Caco-2 (cell line): ENCODE measurements at regions of chr19 and their contacts with region 1.

Region 1: DNA sequence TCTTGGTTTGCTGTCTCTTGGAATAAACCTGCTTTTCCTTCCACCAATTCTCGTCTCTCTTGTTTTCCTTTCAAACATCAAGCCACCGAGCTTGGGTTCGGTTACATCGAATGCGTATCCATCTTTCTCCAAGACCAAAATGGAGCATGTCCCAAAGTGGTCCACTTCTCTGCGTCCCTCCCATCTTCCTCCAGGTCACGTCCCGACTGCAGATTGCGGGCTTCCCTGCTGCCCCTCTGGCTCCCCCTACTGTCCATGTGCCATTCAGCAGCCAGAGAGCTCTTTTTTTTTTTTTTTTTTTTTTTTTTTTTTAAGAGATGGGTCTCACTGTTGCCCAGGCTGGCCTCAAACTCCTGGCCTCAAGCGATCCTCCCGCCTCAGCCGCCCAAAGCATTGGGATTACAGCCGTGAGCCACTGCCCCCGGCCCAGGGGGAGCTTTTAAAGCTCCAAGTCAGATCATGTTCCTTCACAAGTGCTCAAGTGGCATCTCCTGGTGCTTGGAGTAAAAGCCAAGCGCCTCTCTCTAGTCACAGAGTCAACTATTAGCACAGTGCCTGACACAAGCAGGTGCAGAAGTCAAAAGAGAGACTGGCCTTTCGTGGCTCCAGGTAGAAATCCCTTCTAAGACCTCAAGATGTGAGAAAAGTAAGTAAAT is 10.0 kb downstream of the COL5A3 start:
- DNase-seq: peak; percentile 65 to 76
- H3K4me3 ChIP-seq: no peak overlapping the region
- H3K4me3 Mint-ChIP-seq: no peak overlapping the region
- H3K27ac Mint-ChIP-seq: no peak overlapping the region
- H3K4me1 ChIP-seq: no peaks in the 10 kb centered on the region
- H3K4me1 Mint-ChIP-seq: no peaks in the 10 kb centered on the region
- H3K27me3 ChIP-seq: no peaks in the 10 kb centered on the region
- H3K27me3 Mint-ChIP-seq: peaks cover 19% of the 10 kb centered on the region
- CTCF ChIP-seq: peak; percentile 64 to 81

Region 2: DNA sequence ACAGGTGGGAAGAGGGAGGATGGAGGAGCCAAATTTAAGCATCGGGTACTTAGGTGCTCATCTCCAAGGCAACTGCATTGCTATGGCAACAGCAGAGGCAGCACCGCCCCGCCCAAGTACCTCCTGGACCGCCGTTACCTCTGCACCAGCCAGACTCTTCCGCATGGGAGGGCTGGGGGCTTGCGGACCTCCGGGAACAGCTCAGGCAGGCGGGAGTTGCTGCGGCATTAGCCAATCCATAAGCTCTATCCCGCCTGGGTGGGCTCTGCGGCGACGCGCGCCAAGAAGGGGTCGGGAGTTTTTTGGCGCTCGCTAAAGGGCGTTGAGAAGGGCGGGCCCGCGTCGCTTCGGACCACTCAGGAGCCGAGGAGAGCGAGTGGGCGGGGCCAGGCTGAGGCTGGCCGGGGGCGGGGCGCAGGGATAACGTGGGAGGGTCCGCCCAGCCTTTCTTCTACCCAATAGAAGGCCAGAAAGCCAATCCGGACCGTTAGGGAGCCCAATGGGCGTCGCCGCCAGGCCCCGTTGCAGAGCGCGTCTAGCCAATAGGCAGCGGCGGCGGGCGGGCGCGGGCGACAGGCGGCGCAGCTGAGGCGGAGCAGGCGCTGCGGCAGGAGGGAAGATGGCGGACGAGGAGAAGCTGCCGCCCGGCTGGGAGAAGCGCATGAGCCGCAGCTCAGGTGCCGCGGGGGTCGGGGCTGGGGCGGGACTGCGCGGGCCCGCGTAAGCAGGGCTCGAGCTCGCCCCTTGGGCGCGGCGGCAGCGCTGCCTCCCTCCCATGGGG is 165.4 kb before region 1 on chr19 and contains the start of gene PIN1:
- CTCF ChIA-PET with region 1: no interaction called
- POLR2A ChIA-PET with region 1: no interaction called
- intact Hi-C with region 1: no loop called
- DNase-seq: peak; percentile 98
- H3K4me3 ChIP-seq: peak within 1 kb of the TSS; percentile 95
- H3K4me3 Mint-ChIP-seq: peak within 1 kb of the TSS; percentile 84
- H3K27ac Mint-ChIP-seq: peak within 1 kb of the TSS; percentile 83
- H3K4me1 ChIP-seq: no peaks in the 10 kb centered on the region; the same call in 1 of the 2 replicates
- H3K4me1 Mint-ChIP-seq: no peaks in the 10 kb centered on the region
- H3K27me3 ChIP-seq: no peaks in the 10 kb centered on the region
- H3K27me3 Mint-ChIP-seq: no peaks in the 10 kb centered on the region
- CTCF ChIP-seq: peak; percentile 30 to 40
- total RNA-seq, gene PIN1: 63.3 and 65.3 TPM in 2 replicates

Region 3: GRCh38 chr19:10027158-10027693 is 26.9 kb after region 1 on chr19:
- CTCF ChIA-PET with region 1: interaction called, 34 read pairs
- POLR2A ChIA-PET with region 1: no interaction called
- intact Hi-C with region 1: no loop called
- DNase-seq: no peak
- H3K4me3 ChIP-seq: no peak overlapping the region
- H3K4me3 Mint-ChIP-seq: no peak overlapping the region
- H3K27ac Mint-ChIP-seq: no peak overlapping the region
- H3K4me1 ChIP-seq: no peaks in the 10 kb centered on the region
- H3K4me1 Mint-ChIP-seq: no peaks in the 10 kb centered on the region
- H3K27me3 ChIP-seq: no peaks in the 10 kb centered on the region
- H3K27me3 Mint-ChIP-seq: peaks cover 14% of the 10 kb centered on the region
- CTCF ChIP-seq: no peak